Mammary epithelial cell (primary cell): ENCODE measurements at regions of chr12 and their contacts with region 1.

Region 1: DNA sequence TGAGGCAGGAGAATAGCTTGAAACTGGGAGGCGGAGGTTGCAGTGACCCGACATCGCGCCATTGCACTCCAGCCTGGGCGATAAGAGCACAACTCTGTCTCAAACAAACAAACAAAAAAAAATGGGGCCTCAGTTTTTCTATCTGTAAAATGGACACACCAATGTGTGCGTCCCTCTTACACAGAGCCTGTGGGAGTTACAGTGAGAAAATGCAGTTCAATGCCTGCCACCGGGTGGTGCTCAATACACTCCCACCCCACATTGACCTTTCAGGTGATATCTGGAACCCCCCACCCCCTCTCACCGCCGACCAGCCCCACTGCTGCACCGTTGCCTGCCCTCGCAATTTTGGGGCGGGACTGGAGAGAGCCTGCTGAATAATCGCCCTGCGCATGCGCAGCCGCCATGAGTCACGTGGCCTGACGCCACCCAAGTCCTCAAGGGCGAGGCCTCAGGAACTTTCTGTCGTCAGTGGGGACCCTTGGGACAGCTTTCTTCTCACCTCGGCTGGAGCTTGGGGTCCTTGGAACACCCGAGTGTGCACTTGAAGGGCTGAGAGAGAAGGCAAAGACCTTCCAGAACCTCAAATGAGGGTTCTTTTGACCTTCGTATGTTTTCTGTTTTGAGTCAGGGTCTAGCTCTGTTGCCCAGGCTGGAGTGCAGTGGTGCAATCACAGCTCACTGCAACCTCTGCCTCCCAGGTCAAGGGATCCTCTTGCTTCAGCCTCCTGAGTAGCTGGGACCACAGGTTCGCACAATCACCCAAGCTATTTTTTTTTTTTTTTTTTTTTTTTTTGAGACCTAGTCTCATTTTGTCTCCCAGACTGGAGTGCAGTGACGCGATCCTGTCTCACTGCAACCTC is 14.6 kb upstream of the CABP1 start:
- DNase-seq: no peak
- H3K4me3 ChIP-seq: no peak overlapping the region
- H3K27ac ChIP-seq: no peak overlapping the region
- H3K4me1 ChIP-seq: peaks cover 4% of the 10 kb centered on the region
- H3K27me3 ChIP-seq: no peaks in the 10 kb centered on the region
- CTCF ChIP-seq: peak; percentile 22 to 31

Region 2: DNA sequence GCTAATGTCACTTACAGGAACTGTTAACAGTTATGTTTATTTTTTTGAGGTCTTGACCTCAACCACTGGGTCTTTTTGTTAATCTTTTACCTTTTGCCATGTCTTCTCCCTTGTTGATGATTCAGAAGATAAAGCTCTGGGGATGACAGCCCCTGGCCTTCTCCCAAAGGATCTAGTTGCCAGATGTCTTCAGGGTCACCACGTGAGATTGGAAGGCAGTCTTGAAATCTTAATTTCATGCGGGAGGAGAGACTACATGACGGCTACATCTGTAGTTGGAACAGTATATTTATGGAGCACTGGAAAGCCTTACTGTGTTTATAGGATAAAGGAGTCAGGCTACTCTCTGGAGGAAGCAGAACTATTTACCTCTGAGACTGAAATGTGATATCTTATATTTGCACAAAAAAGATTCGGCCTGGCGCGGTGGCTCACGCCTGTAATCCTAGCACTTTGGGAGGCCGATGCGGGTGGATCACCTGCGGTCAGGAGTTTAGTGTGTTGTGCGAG is 66.8 kb after region 1 on chr12:
- CTCF ChIA-PET with region 1: no interaction called
- dilution Hi-C with region 1: loop called (anchors 10 kb)
- in situ Hi-C with region 1: no loop called
- intact Hi-C with region 1: no loop called
- DNase-seq: no peak
- H3K4me3 ChIP-seq: no peak overlapping the region
- H3K27ac ChIP-seq: no peak overlapping the region
- H3K4me1 ChIP-seq: peaks cover 20% of the 10 kb centered on the region
- H3K27me3 ChIP-seq: no peaks in the 10 kb centered on the region
- CTCF ChIP-seq: no peak

Region 3: DNA sequence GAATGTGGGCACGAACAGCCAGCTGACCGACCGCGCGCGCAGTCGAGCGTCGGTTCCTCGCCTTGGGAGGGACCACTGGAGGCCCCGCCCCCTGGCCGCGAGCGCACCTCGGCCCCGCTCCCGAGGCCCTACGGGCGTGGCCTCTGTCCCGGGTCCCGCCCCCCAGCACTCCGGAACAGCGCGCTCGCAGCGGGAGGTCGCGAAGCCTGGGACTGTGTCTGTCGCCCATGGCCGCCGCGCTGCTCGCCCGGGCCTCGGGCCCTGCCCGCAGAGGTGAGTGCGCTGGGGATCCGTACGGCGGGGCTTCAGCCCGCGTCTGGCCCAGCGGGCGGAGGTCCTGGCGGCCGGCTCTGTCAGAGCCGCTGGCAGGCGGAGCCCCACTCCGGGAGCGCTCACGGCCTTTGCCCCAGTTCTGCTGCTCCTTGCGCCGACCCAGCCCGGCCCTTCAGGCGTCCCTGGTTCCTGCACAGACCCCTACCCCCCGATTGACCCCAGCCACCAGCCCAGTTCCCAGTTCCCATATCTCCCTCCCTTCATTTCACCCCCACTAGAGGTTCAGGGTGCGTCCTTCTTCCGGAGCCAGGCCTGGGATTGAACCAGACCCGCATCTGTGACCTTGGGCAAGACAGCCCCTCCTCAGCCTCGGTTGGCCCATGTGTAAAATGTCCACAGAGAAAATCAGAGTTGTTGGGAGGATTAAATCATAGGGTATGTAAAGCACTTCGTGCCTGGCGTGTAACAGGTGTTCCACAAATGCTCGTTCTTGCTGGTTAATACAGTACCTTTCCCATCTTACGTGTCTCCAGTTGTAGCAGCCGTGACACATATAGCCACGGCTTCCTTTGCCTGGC is 100.1 kb after region 1 on chr12 and contains the start of gene ACADS:
- CTCF ChIA-PET with region 1: no interaction called
- dilution Hi-C with region 1: loop called (anchors 10 kb)
- in situ Hi-C with region 1: no loop called
- intact Hi-C with region 1: no loop called
- DNase-seq: peak; percentile 74
- H3K4me3 ChIP-seq: peak within 1 kb of the TSS; percentile 35 to 51 (median 50)
- H3K27ac ChIP-seq: no peak within 1 kb of the TSS
- H3K4me1 ChIP-seq: peaks cover 12% of the 10 kb centered on the region
- H3K27me3 ChIP-seq: no peaks in the 10 kb centered on the region
- CTCF ChIP-seq: no peak
- total RNA-seq, gene ACADS: 1.0 to 3.7 TPM